Sciatic nerve (tissue), 2 donors: ENCODE measurements at regions of chr1 and their contacts with region 1.

Region 1: DNA sequence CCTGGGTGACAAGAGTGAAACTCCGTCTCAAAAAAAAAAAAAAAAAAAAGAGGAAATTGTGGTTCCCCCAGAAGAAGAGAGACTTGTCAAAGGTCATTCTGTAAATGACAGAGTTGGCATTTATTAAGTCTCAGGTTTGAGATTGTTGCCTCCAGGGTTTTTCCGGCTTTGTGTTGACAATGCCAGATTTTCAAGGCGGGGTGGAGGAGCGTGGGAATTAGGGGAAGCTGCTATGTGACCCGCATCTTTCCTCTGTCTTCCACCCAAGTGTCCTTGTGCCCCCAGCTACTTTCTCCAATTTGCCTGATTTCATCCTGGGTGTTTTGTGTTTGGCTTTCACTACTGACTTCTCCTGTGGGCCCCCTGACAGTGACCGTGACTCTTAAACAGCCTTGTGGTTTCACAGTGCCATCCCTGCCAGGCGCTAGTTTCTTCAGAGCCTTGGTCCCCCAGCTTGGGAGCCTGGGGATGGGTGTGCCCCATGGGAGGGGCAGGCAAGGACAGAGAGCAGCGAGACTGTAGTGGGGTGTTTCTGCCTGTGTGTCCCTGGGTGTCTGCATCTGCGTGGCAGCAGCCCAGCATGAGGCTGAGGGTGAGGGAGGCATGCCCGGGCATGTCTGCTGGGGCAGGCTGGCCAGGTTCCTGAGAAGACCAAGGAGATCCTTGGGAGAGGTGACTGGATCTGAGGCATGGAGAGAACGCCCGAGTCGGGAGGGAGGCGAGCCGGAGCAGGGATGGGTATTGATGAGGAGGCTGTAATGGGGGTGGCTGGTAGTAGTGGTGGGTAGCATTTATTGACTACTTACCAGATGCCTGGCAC is 46.3 kb downstream of the IER5 start:
- DNase-seq: no peak
- ATAC-seq: peak; percentile 35

Region 2: GRCh38 chr1:180947901-180948640 is 186.7 kb before region 1 on chr1:
- intact Hi-C with region 1: loop called (anchors 10 kb)
- DNase-seq: no peak
- ATAC-seq: no peak